ENCODE measurements at regions of chr2 and their contacts with region 1.

Region 1: DNA sequence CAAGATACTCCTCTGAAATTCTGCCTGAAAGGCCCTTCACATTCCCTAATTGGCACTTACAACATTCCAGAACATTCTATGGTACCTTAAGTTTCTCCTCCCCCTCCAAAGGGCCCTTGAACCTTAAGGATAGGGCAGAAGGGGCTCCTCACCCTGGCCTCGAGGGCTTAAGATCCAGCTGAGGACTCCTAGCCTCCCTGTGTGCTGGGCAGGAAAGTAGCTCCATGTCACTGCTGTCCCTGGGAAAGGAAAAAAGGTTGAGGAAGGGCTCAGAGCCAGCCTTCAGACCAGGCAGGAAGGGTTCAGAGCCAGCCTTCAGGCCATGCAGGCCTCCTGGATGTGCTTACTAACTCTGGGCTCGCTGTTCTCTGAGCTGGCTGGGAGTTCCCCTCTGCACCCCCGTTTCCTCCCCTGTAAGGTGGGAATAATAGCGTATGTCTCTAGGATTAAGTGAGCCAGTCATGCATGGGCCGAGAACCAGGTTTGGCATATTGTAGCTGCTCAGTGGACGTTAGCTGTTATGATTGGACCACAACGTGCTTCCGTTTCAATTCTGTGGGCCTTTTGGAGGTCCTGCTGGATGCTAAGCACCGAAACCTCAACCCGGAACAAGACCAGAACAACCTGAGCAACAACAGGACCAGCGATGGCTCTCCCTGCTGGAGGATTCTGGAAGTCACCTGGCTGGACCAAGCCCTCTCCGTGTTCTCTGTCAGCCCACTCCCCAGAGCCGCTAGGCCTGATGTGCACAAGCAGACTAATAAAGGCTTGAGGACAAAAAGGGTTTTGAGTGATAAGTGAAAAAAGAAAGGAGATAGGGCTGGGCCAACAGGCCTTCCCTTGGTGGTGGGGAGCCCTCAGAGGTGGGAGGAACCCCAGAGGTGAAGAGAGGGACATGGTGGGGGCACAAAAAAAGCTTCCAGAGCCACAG is 1.0 kb upstream of the B3GNT7 start:
- DNase-seq: peak in 1 of 2 experiments; percentile 44
- H3K4me3 ChIP-seq: no peak overlapping the region
- H3K4me3 Mint-ChIP-seq: peak overlapping the region; percentile 67
- H3K27ac Mint-ChIP-seq: no peak overlapping the region
- H3K4me1 ChIP-seq: peaks cover 9% of the 10 kb centered on the region; the same call in 1 of the 2 replicates
- H3K4me1 Mint-ChIP-seq: peaks cover 6% of the 10 kb centered on the region
- H3K27me3 ChIP-seq: no peaks in the 10 kb centered on the region
- H3K27me3 Mint-ChIP-seq: no peaks in the 10 kb centered on the region
- CTCF ChIP-seq: peak in 1 of 2 experiments; percentile 12

Region 2: GRCh38 chr2:231110551-231110950 is 283.9 kb before region 1 on chr2:
- CTCF ChIA-PET with region 1: no interaction called
- POLR2A ChIA-PET with region 1: no interaction called
- intact Hi-C with region 1: no loop called
- DNase-seq: no peak
- H3K4me3 ChIP-seq: no peak overlapping the region
- H3K4me3 Mint-ChIP-seq: no peak overlapping the region
- H3K27ac Mint-ChIP-seq: no peak overlapping the region
- H3K4me1 ChIP-seq: no peaks in the 10 kb centered on the region
- H3K4me1 Mint-ChIP-seq: no peaks in the 10 kb centered on the region
- H3K27me3 ChIP-seq: no peaks in the 10 kb centered on the region
- H3K27me3 Mint-ChIP-seq: no peaks in the 10 kb centered on the region
- CTCF ChIP-seq: no peak

Region 3: GRCh38 chr2:231227309-231228162 is 166.9 kb before region 1 on chr2:
- CTCF ChIA-PET with region 1: no interaction called
- POLR2A ChIA-PET with region 1: no interaction called
- intact Hi-C with region 1: loop called (anchors 2 kb)
- DNase-seq: peak; percentile 59 to 63
- H3K4me3 ChIP-seq: no peak overlapping the region
- H3K4me3 Mint-ChIP-seq: no peak overlapping the region
- H3K27ac Mint-ChIP-seq: no peak overlapping the region
- H3K4me1 ChIP-seq: no peaks in the 10 kb centered on the region
- H3K4me1 Mint-ChIP-seq: peaks cover 6% of the 10 kb centered on the region
- H3K27me3 ChIP-seq: no peaks in the 10 kb centered on the region
- H3K27me3 Mint-ChIP-seq: no peaks in the 10 kb centered on the region
- CTCF ChIP-seq: peak; percentile 68 to 71